ENCODE measurements at regions of chr1 and their contacts with region 1.

Region 1: DNA sequence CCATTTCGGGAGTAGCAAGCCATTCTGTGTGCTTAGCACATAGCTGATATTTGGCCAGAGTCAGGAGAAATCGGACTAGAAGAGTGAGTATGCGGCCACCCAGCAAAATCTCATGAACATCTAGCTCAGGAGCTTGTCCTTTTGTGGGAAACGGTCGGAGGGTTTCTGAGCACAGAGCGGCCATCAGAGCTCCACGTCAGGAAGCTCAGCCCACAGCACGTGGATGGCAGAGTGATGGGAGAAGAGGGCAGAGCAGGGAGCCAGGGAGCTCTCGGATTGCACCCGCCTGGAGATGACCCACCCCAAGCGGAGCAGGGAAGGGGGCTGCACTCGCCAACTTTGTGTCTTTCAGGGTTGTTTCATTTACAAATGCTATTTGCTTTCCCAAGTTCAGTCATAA is 13.9 kb downstream of the RCAN3 start:
- DNase-seq: no peak
- ATAC-seq: no peak
- H3K4me3 ChIP-seq: no peak overlapping the region
- H3K27ac ChIP-seq: peak overlapping the region; percentile 56 to 72; a peak in 4 of 6 replicates
- H3K4me1 ChIP-seq: peaks cover 22% of the 10 kb centered on the region
- CTCF ChIP-seq: no peak
- EP300 ChIP-seq: no peak
- POLR2A ChIP-seq: no peak
- RAD21 ChIP-seq: no peak

Region 2: GRCh38 chr1:24074817-24075725 is 441.4 kb before region 1 on chr1:
- CTCF ChIA-PET with region 1: no interaction called
- POLR2A ChIA-PET with region 1: no interaction called
- DNase-seq: no peak
- ATAC-seq: no peak
- H3K4me3 ChIP-seq: no peak overlapping the region
- H3K27ac ChIP-seq: no peak overlapping the region
- H3K4me1 ChIP-seq: peaks cover 8% of the 10 kb centered on the region; the same call in 2 of the 3 replicates
- CTCF ChIP-seq: no peak
- EP300 ChIP-seq: no peak
- POLR2A ChIP-seq: no peak
- RAD21 ChIP-seq: peak in 1 of 2 experiments; percentile 14; a peak in 1 of 5 replicates

Region 3: GRCh38 chr1:24526940-24527542 is 10.5 kb after region 1 on chr1:
- CTCF ChIA-PET with region 1: interaction called, 13 read pairs
- POLR2A ChIA-PET with region 1: no interaction called
- DNase-seq: peak; percentile 25 to 26
- ATAC-seq: peak in 1 of 2 experiments; percentile 59; a peak in 1 of 6 replicates
- H3K4me3 ChIP-seq: no peak overlapping the region
- H3K27ac ChIP-seq: no peak overlapping the region
- H3K4me1 ChIP-seq: no peaks in the 10 kb centered on the region
- CTCF ChIP-seq: peak; percentile 56
- EP300 ChIP-seq: no peak
- POLR2A ChIP-seq: no peak
- RAD21 ChIP-seq: peak; percentile 33 to 50; a peak in 4 of 5 replicates

Region 4: DNA sequence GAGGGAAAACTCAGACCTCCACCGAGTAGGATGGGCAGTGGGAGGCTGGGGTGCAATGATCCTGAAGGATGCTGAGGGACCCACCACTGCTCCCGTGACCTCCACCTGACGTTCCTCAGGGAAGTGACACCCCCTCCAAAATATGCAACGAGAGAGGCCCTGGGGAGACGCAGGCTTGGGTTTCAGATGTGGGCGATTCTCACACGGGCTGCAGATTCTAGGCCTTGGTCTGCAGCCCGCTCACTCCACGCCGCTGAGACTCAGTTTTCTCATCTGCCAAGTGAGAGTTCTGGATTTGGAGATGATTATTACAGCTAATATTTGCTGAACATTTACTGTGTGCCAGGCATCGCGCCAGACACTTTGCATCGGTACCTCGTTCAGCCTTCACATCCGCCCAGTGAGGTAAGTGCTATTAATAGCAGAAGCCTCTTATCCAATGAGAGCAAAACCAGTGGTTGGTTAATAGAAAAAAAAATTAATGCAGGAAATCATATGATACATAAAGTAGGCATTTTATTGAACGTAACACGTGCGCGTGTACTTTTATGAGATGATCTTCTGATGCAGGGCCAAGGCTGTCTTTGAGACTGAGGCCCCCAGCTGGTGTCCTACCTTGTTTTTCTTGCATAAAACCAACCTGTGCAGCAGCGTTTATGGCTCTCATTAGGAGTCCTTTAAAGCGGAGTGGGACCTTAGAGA is 515.6 kb after region 1 on chr1:
- CTCF ChIA-PET with region 1: no interaction called
- POLR2A ChIA-PET with region 1: no interaction called
- DNase-seq: peak in 1 of 2 experiments; percentile 28
- ATAC-seq: peak in 1 of 2 experiments; percentile 40; a peak in 1 of 6 replicates
- H3K4me3 ChIP-seq: no peak overlapping the region
- H3K27ac ChIP-seq: no peak overlapping the region; a peak in 1 of 6 replicates
- H3K4me1 ChIP-seq: no peaks in the 10 kb centered on the region
- CTCF ChIP-seq: no peak
- EP300 ChIP-seq: no peak
- POLR2A ChIP-seq: no peak
- RAD21 ChIP-seq: no peak